Heart right ventricle (tissue), 16 donors: ENCODE measurements at regions of chr18 and their contacts with region 1.

Region 1: GRCh38 chr18:50644810-50645209 is 84.9 kb downstream of the MAPK4 start:
- DNase-seq: no peak
- ATAC-seq: peak in 1 of 8 donors; percentile 15
- H3K4me3 ChIP-seq: no peak overlapping the region
- H3K27ac ChIP-seq: no peak overlapping the region
- H3K4me1 ChIP-seq: peaks cover 0 to 12% (median 5%) of the 10 kb centered on the region in 9 donors
- H3K27me3 ChIP-seq: no peaks in the 10 kb centered on the region
- CTCF ChIP-seq: peak in 5 of 9 donors; percentile 16 to 40 (median 23)

Region 2: DNA sequence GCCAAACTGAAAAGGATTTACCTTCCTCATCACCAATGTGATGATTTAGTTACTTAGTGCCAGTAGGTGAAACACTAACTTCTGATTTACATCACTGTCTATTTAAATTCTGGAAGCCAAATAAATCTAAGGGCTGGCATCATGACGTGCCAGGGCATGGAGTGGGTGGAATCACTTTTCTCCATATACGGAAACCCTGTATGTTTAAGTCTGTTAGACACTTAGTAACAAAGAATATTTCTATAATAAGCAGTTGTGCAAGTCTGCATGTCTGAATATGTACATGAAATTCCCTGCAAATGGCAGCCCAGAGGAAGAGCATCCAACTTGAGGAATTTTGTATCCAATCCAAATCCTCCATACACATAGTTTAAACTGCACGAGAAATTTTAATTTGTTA is 1450.9 kb before region 1 on chr18:
- intact Hi-C with region 1: no loop called
- DNase-seq: no peak
- ATAC-seq: no peak
- H3K4me3 ChIP-seq: no peak overlapping the region
- H3K27ac ChIP-seq: no peak overlapping the region
- H3K4me1 ChIP-seq: peaks cover 0 to 24% (median 11%) of the 10 kb centered on the region in 9 donors
- H3K27me3 ChIP-seq: no peaks in the 10 kb centered on the region
- CTCF ChIP-seq: no peak

Region 3: DNA sequence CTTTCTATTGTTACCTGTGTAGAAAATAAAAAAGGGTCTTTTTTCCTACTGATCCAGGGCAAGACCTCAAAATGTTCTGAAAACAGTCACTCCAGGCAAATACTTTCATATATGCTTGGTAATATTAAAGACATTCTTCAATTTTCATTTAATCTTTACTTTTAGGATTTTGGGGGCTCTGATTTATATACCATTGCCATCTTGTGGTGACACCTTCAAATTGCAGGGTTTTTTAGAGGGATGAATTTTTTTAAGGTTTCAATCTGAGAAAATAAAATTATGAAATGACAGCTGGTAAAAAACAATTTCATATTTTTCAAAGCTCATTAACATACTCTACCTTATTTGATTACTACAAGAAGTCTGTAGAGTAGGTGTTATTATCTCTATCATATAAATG is 58.1 kb before region 1 on chr18:
- intact Hi-C with region 1: loop called in 1 of 10 experiments (anchors 10 kb)
- DNase-seq: no peak
- ATAC-seq: no peak
- H3K4me3 ChIP-seq: no peak overlapping the region
- H3K27ac ChIP-seq: no peak overlapping the region
- H3K4me1 ChIP-seq: peaks cover 0 to 13% (median 0%) of the 10 kb centered on the region in 9 donors
- H3K27me3 ChIP-seq: no peaks in the 10 kb centered on the region
- CTCF ChIP-seq: peak in 2 of 9 donors; percentile 6 to 19

Region 4: DNA sequence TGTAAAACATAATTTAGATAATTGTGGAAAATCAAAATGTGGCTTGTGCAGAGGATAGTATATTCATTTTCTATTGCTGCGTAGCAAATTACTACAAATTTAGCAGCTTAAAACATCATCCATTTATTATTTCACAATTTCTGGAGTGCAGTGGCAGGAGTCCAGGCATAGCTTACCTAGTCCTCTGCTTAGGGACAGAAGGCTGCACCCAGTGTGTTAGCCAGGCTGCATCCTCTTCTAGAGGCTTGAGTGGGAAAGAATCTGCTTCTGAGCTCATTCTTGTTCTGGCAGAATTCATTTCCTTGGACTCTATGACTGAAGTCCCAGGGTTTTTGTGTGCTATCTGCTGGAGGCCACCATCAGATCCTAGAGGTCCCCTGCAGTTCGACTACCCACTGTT is 135.3 kb after region 1 on chr18:
- intact Hi-C with region 1: no loop called
- DNase-seq: no peak
- ATAC-seq: no peak
- H3K4me3 ChIP-seq: no peak overlapping the region
- H3K27ac ChIP-seq: no peak overlapping the region
- H3K4me1 ChIP-seq: no peaks in the 10 kb centered on the region
- H3K27me3 ChIP-seq: no peaks in the 10 kb centered on the region
- CTCF ChIP-seq: no peak

Region 5: GRCh38 chr18:50806208-50806616 is 161.4 kb after region 1 on chr18:
- intact Hi-C with region 1: no loop called
- DNase-seq: peak in 1 of 2 donors; percentile 17
- ATAC-seq: peak in 6 of 8 donors; percentile 28 to 75 (median 61)
- H3K4me3 ChIP-seq: no peak overlapping the region
- H3K27ac ChIP-seq: no peak overlapping the region
- H3K4me1 ChIP-seq: peaks cover 0 to 12% (median 0%) of the 10 kb centered on the region in 9 donors
- H3K27me3 ChIP-seq: peaks cover 0 to 6% (median 0%) of the 10 kb centered on the region in 7 donors
- CTCF ChIP-seq: no peak

Region 6: GRCh38 chr18:50836521-50836957 is 191.7 kb after region 1 on chr18:
- intact Hi-C with region 1: no loop called
- DNase-seq: no peak
- ATAC-seq: peak in 1 of 8 donors; percentile 34
- H3K4me3 ChIP-seq: no peak overlapping the region
- H3K27ac ChIP-seq: peak overlapping the region in 1 of 10 donors; percentile 58
- H3K4me1 ChIP-seq: peaks cover 0 to 21% (median 7%) of the 10 kb centered on the region in 9 donors
- H3K27me3 ChIP-seq: no peaks in the 10 kb centered on the region
- CTCF ChIP-seq: no peak